ENCODE measurements at regions of chr4 and their contacts with region 1.

Region 1: DNA sequence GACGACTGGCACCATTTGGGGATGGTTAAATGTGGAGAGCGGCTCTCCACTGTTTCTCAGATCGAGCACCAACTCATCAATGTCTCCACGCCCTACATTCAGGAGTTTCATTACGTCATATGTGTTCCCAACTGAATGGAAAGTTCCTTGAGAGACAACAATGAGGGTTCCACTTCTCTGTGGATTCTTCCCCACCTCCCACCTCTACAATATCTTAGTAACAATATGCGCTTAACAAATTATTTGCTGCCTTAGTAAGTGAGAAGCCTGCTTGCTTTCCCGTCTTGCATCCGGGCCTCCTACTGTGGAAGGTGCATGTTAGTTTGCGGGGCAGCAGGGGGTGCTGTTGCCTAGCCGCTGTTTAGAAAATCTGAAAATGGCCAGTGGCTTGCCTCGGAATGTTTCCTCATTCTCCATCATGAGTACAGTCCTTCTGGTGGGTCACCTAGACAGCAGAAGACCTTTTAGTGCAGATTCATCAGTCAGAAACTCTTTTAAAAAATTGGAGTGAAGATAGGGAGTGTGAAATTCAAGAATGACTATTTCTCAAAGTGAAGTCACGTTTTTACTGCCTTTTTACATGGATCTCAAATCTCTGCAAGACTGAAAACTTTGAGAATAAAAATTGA is 55.7 kb downstream of the PHOX2B start:
- DNase-seq: peak; percentile 52
- H3K4me3 Mint-ChIP-seq: no peak overlapping the region
- H3K27ac Mint-ChIP-seq: no peak overlapping the region
- H3K4me1 Mint-ChIP-seq: no peaks in the 10 kb centered on the region
- H3K27me3 Mint-ChIP-seq: peaks cover 5% of the 10 kb centered on the region

Region 2: DNA sequence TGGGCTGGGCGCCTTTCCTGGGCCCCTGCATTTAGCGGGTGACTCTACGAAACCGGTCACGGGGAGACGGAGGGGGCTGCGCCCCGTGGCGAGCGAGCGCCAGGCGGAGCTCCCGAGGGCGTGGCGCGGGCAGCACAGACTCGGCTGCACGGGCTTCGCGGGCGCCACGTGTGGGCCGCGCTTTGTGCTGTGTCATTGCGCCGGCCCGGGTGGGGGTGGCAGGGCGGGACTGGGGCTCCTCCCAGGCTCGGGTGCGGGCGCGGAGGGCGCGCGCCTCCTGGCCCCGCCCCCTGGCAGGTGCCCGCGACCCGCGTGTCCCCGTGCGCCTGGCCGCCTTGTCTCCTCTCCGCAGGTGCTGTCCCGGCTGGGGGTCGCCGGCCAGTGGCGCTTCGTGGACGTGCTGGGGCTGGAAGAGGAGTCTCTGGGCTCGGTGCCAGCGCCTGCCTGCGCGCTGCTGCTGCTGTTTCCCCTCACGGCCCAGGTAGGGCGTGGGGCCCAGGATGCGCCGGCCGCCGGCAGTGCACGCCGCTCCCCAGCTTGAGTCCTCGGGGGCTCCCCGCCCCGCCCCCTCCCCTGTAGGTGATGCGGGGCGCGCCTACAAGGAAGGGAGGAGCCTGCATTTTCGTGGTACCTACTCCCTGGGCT is 435.5 kb before region 1 on chr4:
- CTCF ChIA-PET with region 1: no interaction called
- intact Hi-C with region 1: no loop called
- DNase-seq: peak; percentile 29
- H3K4me3 Mint-ChIP-seq: peak overlapping the region; percentile 60
- H3K27ac Mint-ChIP-seq: no peak overlapping the region
- H3K4me1 Mint-ChIP-seq: peaks cover 8% of the 10 kb centered on the region
- H3K27me3 Mint-ChIP-seq: peaks cover 57% of the 10 kb centered on the region

Region 3: DNA sequence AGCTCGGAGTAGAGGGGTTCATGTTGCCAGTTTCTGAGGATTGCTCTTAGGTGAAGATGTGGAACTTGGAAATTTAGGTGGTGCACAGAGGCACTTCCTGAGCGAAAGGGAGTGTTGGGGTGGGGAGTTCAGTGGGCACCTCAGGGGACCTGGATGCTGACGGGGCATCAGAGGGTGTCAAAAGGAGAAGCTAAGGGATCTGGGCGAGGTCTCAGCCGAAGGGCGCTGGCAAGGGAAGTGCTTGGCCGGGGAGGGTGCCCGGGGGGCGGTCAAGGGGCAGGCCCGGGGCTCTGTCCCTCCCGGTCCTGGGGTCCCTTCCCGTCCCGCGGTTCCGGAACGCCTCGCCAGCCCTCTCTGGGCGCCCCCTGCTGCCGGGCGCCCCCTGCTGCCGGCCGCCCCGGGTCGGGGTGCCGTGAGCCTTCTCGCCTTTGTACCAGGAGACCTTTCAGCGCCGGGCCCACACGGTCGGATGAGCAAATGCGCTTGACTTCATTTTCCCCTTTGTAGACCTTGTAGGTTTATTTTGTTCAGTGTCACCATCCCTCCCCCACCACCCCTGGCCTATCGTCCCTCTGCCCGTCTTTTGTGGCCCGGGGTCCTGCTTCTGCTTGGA is 58.7 kb after region 1 on chr4:
- CTCF ChIA-PET with region 1: no interaction called
- intact Hi-C with region 1: loop called (anchors 1 kb)
- DNase-seq: no peak
- H3K4me3 Mint-ChIP-seq: no peak overlapping the region
- H3K27ac Mint-ChIP-seq: no peak overlapping the region
- H3K4me1 Mint-ChIP-seq: peaks cover 4% of the 10 kb centered on the region
- H3K27me3 Mint-ChIP-seq: peaks cover 81% of the 10 kb centered on the region

Region 4: GRCh38 chr4:41882625-41883347 is 190.0 kb after region 1 on chr4:
- CTCF ChIA-PET with region 1: interaction called, 22 read pairs
- intact Hi-C with region 1: loop called (anchors 1 kb)
- DNase-seq: peak; percentile 63
- H3K4me3 Mint-ChIP-seq: peak overlapping the region; percentile 39
- H3K27ac Mint-ChIP-seq: no peak overlapping the region
- H3K4me1 Mint-ChIP-seq: peaks cover 17% of the 10 kb centered on the region
- H3K27me3 Mint-ChIP-seq: peaks cover 44% of the 10 kb centered on the region

Region 5: GRCh38 chr4:41887821-41888686 is 195.2 kb after region 1 on chr4:
- CTCF ChIA-PET with region 1: interaction called, 22 read pairs
- intact Hi-C with region 1: loop called (anchors 1 kb)
- DNase-seq: peak; percentile 69
- H3K4me3 Mint-ChIP-seq: no peak overlapping the region
- H3K27ac Mint-ChIP-seq: no peak overlapping the region
- H3K4me1 Mint-ChIP-seq: no peaks in the 10 kb centered on the region
- H3K27me3 Mint-ChIP-seq: peaks cover 5% of the 10 kb centered on the region

Region 6: GRCh38 chr4:42396752-42397634 is 704.2 kb after region 1 on chr4 and contains the start of gene SHISA3:
- CTCF ChIA-PET with region 1: no interaction called
- intact Hi-C with region 1: loop called (anchors 5 kb)
- DNase-seq: peak; percentile 43
- H3K4me3 Mint-ChIP-seq: peak within 1 kb of the TSS; percentile 72
- H3K27ac Mint-ChIP-seq: no peak within 1 kb of the TSS
- H3K4me1 Mint-ChIP-seq: peaks cover 27% of the 10 kb centered on the region
- H3K27me3 Mint-ChIP-seq: peaks cover 52% of the 10 kb centered on the region
- total RNA-seq, gene SHISA3: 0.72 to 0.77 TPM

Measured in activated naive CD4-positive, alpha-beta T cell treated with anti-CD3 and anti-CD28 coated beads for 36 hours (primary cell).